A549 (cell line): ENCODE measurements at regions of chr10 and their contacts with region 1.

Region 1: GRCh38 chr10:97914837-97915211 is 65.2 kb downstream of the GOLGA7B start:
- DNase-seq: peak; percentile 66 to 82
- ATAC-seq: peak; percentile 90 to 97
- H3K4me3 ChIP-seq: no peak overlapping the region
- H3K27ac ChIP-seq: peak overlapping the region; percentile 3 to 69; a peak in 3 of 6 replicates
- H3K4me1 ChIP-seq: 0 out of 3 replicates have a peak, but pooled peaks cover 2% of the 10 kb centered on the region
- CTCF ChIP-seq: peak; percentile 93
- EP300 ChIP-seq: no peak
- POLR2A ChIP-seq: no peak
- RAD21 ChIP-seq: peak; percentile 96 to 97

Region 2: GRCh38 chr10:97888641-97889262 is 26.1 kb before region 1 on chr10:
- CTCF ChIA-PET with region 1: interaction called, 20 read pairs
- POLR2A ChIA-PET with region 1: interaction called, 4 read pairs
- DNase-seq: peak; percentile 74 to 86
- ATAC-seq: peak; percentile 66 to 70
- H3K4me3 ChIP-seq: peak overlapping the region; percentile 25; the same call in 2 of the 3 replicates
- H3K27ac ChIP-seq: peak overlapping the region; percentile 95 to 97
- H3K4me1 ChIP-seq: peaks cover 43% of the 10 kb centered on the region
- CTCF ChIP-seq: peak; percentile 47
- EP300 ChIP-seq: peak in 1 of 2 experiments; percentile 27; a peak in 1 of 5 replicates
- POLR2A ChIP-seq: no peak
- RAD21 ChIP-seq: no peak

Region 3: GRCh38 chr10:97903128-97904017 is 11.5 kb before region 1 on chr10:
- CTCF ChIA-PET with region 1: interaction called, 62 read pairs
- POLR2A ChIA-PET with region 1: no interaction called
- DNase-seq: no peak
- ATAC-seq: peak in 1 of 2 experiments; percentile 46; a peak in 3 of 6 replicates
- H3K4me3 ChIP-seq: no peak overlapping the region
- H3K27ac ChIP-seq: no peak overlapping the region
- H3K4me1 ChIP-seq: peaks cover 5% of the 10 kb centered on the region; the same call in 1 of the 3 replicates
- CTCF ChIP-seq: no peak
- EP300 ChIP-seq: no peak
- POLR2A ChIP-seq: no peak
- RAD21 ChIP-seq: no peak

Region 4: DNA sequence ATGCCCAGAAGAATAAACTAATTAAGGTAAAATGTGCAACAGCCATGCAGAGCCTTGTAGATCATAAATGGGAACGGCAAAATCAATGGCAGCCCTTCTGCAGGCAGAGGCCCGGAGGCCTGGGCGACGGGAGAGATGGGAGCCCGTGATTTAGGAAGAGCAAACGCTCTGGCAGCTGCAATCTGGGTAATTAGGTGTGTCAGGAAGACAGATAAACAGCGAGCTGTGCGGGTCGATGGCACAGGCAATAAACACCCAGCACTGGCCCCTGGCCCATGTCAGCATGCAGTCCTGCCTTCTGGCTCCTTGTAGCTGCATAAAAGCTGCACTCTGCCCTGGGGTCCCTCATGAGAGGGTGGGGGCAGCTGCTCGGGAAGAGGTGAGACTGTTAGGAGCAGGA is 12.8 kb after region 1 on chr10:
- CTCF ChIA-PET with region 1: interaction called, 23 read pairs
- POLR2A ChIA-PET with region 1: no interaction called
- DNase-seq: no peak
- ATAC-seq: no peak
- H3K4me3 ChIP-seq: no peak overlapping the region
- H3K27ac ChIP-seq: no peak overlapping the region
- H3K4me1 ChIP-seq: no peaks in the 10 kb centered on the region
- CTCF ChIP-seq: no peak
- EP300 ChIP-seq: no peak
- POLR2A ChIP-seq: no peak
- RAD21 ChIP-seq: no peak

Region 5: GRCh38 chr10:98285416-98285815 is 370.6 kb after region 1 on chr10:
- CTCF ChIA-PET with region 1: no interaction called
- POLR2A ChIA-PET with region 1: no interaction called
- DNase-seq: no peak
- ATAC-seq: no peak
- H3K4me3 ChIP-seq: no peak overlapping the region
- H3K27ac ChIP-seq: no peak overlapping the region
- H3K4me1 ChIP-seq: no peaks in the 10 kb centered on the region
- CTCF ChIP-seq: no peak
- EP300 ChIP-seq: no peak
- POLR2A ChIP-seq: no peak
- RAD21 ChIP-seq: no peak